ENCODE measurements at regions of chr19 and their contacts with region 1.

Region 1: DNA sequence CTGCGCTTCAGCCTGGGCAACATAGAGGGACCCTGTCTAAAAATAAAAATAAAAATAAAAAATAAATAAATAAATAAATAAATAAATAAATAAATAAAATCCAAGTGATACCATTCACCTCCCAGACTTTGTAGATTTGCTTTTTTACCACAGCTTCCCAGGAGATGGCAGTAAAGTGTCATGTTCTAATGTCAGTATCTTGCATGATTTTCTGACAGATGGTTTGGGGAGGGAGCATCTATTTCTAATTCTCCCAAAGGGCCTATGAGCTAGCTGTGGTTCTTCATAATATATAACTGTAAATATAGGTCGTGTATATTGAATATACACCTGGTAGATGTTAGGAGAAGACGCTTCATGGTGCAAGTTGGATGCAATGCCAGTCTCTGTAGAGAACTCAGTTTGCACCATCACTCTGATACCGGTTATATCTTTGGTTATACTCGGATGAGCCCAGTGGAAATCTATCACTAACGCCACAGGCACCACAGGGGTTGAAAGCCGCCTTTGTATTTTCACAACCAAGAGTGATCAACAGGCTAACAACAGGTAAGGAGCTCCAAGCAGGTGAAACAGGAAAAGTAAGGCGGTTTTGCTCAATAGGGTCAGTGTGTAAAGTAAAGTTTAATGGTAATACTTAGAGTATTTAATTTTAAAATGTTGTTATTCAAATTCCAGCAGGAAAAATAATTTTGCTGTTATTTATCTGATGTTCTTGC is 13.9 kb downstream of the APLP1 start:
- DNase-seq: peak; percentile 71 to 75 (median 72)
- H3K4me3 ChIP-seq: no peak overlapping the region
- H3K4me3 Mint-ChIP-seq: no peak overlapping the region
- H3K27ac ChIP-seq: no peak overlapping the region
- H3K27ac Mint-ChIP-seq: peak overlapping the region in 2 of 7 donors; percentile 57 to 72
- H3K4me1 ChIP-seq: peaks cover 13% of the 10 kb centered on the region
- H3K4me1 Mint-ChIP-seq: peaks cover 8 to 19% (median 9%) of the 10 kb centered on the region in 4 donors
- H3K27me3 ChIP-seq: peaks cover 14% of the 10 kb centered on the region
- H3K27me3 Mint-ChIP-seq: peaks cover 7 to 15% of the 10 kb centered on the region in 2 donors

Region 2: GRCh38 chr19:35894342-35894741 is 12.1 kb after region 1 on chr19:
- CTCF ChIA-PET with region 1: interaction called, 18 read pairs
- POLR2A ChIA-PET with region 1: interaction called, 28 read pairs
- intact Hi-C with region 1: no loop called
- DNase-seq: no peak
- H3K4me3 ChIP-seq: no peak overlapping the region
- H3K4me3 Mint-ChIP-seq: no peak overlapping the region
- H3K27ac ChIP-seq: no peak overlapping the region
- H3K27ac Mint-ChIP-seq: peak overlapping the region in 3 of 7 donors; percentile 27 to 59 (median 37)
- H3K4me1 ChIP-seq: peaks cover 35% of the 10 kb centered on the region
- H3K4me1 Mint-ChIP-seq: peaks cover 13 to 40% (median 18%) of the 10 kb centered on the region in 4 donors
- H3K27me3 ChIP-seq: no peaks in the 10 kb centered on the region
- H3K27me3 Mint-ChIP-seq: no peaks in the 10 kb centered on the region

Region 3: GRCh38 chr19:35931161-35931873 is 49.0 kb after region 1 on chr19:
- CTCF ChIA-PET with region 1: interaction called, 125 read pairs
- POLR2A ChIA-PET with region 1: interaction called, 89 read pairs
- intact Hi-C with region 1: loop called (anchors 1 kb)
- DNase-seq: peak; percentile 99 to 100 (median 100)
- H3K4me3 ChIP-seq: peak overlapping the region in 1 of 2 donors; percentile 49
- H3K4me3 Mint-ChIP-seq: peak overlapping the region; percentile 76 to 85 (median 80)
- H3K27ac ChIP-seq: peak overlapping the region; percentile 54
- H3K27ac Mint-ChIP-seq: peak overlapping the region; percentile 86 to 97 (median 95)
- H3K4me1 ChIP-seq: peaks cover 47% of the 10 kb centered on the region
- H3K4me1 Mint-ChIP-seq: peaks cover 27 to 62% (median 38%) of the 10 kb centered on the region in 4 donors
- H3K27me3 ChIP-seq: no peaks in the 10 kb centered on the region
- H3K27me3 Mint-ChIP-seq: no peaks in the 10 kb centered on the region

Region 4: DNA sequence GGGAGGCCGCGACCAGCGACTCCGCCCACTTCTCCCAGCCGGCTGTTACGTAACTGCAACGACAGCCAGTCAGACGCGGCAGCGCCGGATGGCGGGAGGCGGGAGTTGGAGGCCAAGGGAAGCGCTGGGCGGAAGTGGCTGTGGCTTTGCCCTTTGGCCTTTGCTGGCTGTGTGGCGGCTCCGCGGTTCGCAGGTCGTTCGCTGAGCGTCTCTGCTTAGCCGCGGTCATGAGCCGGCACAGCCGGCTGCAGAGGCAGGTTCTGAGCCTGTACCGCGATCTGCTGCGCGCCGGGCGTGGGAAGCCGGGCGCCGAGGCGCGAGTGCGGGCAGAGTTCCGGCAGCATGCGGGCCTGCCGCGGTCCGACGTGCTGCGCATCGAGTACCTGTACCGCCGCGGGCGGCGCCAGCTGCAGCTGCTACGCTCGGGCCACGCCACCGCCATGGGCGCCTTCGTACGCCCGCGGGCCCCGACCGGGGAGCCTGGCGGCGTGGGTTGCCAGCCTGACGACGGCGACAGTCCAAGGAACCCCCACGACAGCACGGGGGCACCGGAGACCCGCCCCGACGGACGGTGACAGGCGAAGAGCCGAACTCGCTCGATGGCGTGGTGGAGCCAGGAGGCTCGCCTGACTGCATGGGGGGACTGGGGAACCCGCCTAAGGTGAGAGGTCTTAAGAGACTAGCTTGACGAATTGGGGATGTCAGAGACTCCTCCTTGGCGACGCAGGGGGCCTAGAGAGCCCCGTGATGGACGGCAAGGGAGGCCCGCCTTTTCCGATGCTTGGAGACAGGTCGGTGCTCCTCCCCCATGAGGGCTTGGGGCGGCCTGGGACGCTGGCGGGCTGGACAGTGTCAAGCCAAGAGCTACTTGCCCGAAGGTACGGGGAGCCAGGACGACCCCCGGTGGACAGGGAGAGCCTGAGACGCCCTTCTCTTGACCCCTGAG is 113.0 kb after region 1 on chr19 and contains the start of gene SDHAF1:
- CTCF ChIA-PET with region 1: no interaction called
- POLR2A ChIA-PET with region 1: no interaction called
- intact Hi-C with region 1: no loop called
- DNase-seq: peak; percentile 87 to 92 (median 87)
- H3K4me3 ChIP-seq: peak within 1 kb of the TSS; percentile 69 to 82
- H3K4me3 Mint-ChIP-seq: peak within 1 kb of the TSS; percentile 91 to 96 (median 94)
- H3K27ac ChIP-seq: peak within 1 kb of the TSS; percentile 71
- H3K27ac Mint-ChIP-seq: peak within 1 kb of the TSS; percentile 92 to 97 (median 97)
- H3K4me1 ChIP-seq: peaks cover 26% of the 10 kb centered on the region
- H3K4me1 Mint-ChIP-seq: peaks cover 20 to 48% (median 37%) of the 10 kb centered on the region in 4 donors
- H3K27me3 ChIP-seq: no peaks in the 10 kb centered on the region
- H3K27me3 Mint-ChIP-seq: no peaks in the 10 kb centered on the region
- total RNA-seq, gene SDHAF1: 25.7 to 25.8 TPM